ENCODE measurements at regions of chr6 and their contacts with region 1.

Region 1: DNA sequence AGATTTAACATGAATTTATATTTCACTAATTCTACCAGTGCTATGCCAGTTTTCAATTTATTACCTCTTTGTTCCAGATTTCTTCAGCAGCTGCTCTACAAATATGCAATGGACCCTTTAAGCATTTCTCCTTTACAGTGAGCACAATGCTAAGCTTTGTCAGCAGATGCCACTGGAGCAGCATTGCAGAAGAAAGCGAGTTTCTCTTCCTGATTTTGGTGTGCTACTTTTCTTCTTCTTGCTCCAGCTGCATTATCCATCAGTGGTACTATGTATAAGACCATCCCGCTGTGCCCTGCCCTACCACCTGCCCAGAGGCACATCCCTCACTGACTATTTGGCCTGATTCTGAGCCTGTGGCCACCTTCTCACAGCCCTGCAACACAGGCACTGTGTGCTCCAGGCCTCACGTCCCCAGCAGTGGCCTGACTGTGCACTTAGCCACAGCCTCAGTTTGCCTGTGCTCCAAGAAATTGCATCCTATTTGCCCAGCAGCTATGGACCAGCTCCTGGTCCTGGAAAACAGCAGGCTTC is 84.1 kb downstream of the TNFAIP3 start:
- DNase-seq: no peak
- ATAC-seq: peak; percentile 20

Region 2: GRCh38 chr6:137799950-137800568 is 151.1 kb before region 1 on chr6:
- intact Hi-C with region 1: loop called (anchors 10 kb)
- DNase-seq: no peak
- ATAC-seq: peak; percentile 75